Panc1 (cell line): ENCODE measurements at regions of chr17 and their contacts with region 1.

Region 1: GRCh38 chr17:549177-550040 is 165.2 kb downstream of the VPS53 start:
- DNase-seq: no peak
- ATAC-seq: no peak
- H3K4me3 ChIP-seq: no peak overlapping the region
- H3K27ac ChIP-seq: no peak overlapping the region
- H3K4me1 ChIP-seq: no peaks in the 10 kb centered on the region
- H3K27me3 ChIP-seq: no peaks in the 10 kb centered on the region
- CTCF ChIP-seq: no peak

Region 2: DNA sequence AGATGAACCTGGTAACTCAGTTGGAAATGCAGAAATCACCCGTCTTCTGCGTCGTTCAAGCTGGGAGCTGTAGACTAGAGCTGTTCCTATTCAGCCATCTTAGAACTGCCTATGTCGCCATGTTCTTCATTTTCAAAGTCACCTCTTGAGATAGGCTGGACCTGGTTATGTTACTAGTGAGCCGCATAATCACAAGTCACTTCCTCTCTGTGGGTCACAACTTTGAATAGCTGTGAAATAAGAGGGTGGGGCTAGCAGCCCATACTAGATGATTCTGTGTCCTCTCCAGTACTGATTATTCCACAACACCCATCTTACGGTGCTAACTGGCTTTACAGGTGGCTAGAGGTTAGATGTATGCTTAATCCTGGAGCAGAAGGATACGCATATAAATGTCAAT is 91.0 kb after region 1 on chr17:
- CTCF ChIA-PET with region 1: no interaction called
- POLR2A ChIA-PET with region 1: interaction called, 10 read pairs
- in situ Hi-C with region 1: no loop called
- intact Hi-C with region 1: no loop called
- DNase-seq: no peak
- ATAC-seq: no peak
- H3K4me3 ChIP-seq: no peak overlapping the region
- H3K27ac ChIP-seq: no peak overlapping the region
- H3K4me1 ChIP-seq: no peaks in the 10 kb centered on the region
- H3K27me3 ChIP-seq: no peaks in the 10 kb centered on the region
- CTCF ChIP-seq: no peak